ENCODE measurements at regions of chr20 and their contacts with region 1.

Region 1: GRCh38 chr20:51715163-51715860 is 52.9 kb downstream of the ATP9A start:
- DNase-seq: no peak
- H3K4me3 Mint-ChIP-seq: peak overlapping the region; percentile 60
- H3K27ac Mint-ChIP-seq: peak overlapping the region; percentile 74
- H3K4me1 Mint-ChIP-seq: peaks cover 19% of the 10 kb centered on the region
- H3K27me3 Mint-ChIP-seq: peaks cover 2% of the 10 kb centered on the region

Region 2: GRCh38 chr20:51404298-51405060 is 310.8 kb before region 1 on chr20:
- intact Hi-C with region 1: loop called (anchors 1 kb)
- DNase-seq: peak; percentile 94
- H3K4me3 Mint-ChIP-seq: peak overlapping the region; percentile 75
- H3K27ac Mint-ChIP-seq: peak overlapping the region; percentile 97
- H3K4me1 Mint-ChIP-seq: peaks cover 81% of the 10 kb centered on the region
- H3K27me3 Mint-ChIP-seq: no peaks in the 10 kb centered on the region

Region 3: GRCh38 chr20:51661609-51662178 is 53.6 kb before region 1 on chr20:
- intact Hi-C with region 1: loop called (anchors 1 kb)
- DNase-seq: peak; percentile 80
- H3K4me3 Mint-ChIP-seq: no peak overlapping the region
- H3K27ac Mint-ChIP-seq: peak overlapping the region; percentile 39
- H3K4me1 Mint-ChIP-seq: peaks cover 21% of the 10 kb centered on the region
- H3K27me3 Mint-ChIP-seq: peaks cover 8% of the 10 kb centered on the region

Region 4: GRCh38 chr20:51732096-51732791 is 16.9 kb after region 1 on chr20:
- intact Hi-C with region 1: loop called (anchors 1 kb)
- DNase-seq: no peak
- H3K4me3 Mint-ChIP-seq: peak overlapping the region; percentile 79
- H3K27ac Mint-ChIP-seq: peak overlapping the region; percentile 97
- H3K4me1 Mint-ChIP-seq: peaks cover 9% of the 10 kb centered on the region
- H3K27me3 Mint-ChIP-seq: no peaks in the 10 kb centered on the region

Measured in activated CD4-positive, alpha-beta T cell treated with anti-CD3 and anti-CD28 coated beads, Interleukin-2, amount 10 ng/mL, durations not matched to agents 24 days and 14 days (primary cell).